GM12878 (cell line): ENCODE measurements at regions of chr1 and their contacts with region 1.

Region 1: DNA sequence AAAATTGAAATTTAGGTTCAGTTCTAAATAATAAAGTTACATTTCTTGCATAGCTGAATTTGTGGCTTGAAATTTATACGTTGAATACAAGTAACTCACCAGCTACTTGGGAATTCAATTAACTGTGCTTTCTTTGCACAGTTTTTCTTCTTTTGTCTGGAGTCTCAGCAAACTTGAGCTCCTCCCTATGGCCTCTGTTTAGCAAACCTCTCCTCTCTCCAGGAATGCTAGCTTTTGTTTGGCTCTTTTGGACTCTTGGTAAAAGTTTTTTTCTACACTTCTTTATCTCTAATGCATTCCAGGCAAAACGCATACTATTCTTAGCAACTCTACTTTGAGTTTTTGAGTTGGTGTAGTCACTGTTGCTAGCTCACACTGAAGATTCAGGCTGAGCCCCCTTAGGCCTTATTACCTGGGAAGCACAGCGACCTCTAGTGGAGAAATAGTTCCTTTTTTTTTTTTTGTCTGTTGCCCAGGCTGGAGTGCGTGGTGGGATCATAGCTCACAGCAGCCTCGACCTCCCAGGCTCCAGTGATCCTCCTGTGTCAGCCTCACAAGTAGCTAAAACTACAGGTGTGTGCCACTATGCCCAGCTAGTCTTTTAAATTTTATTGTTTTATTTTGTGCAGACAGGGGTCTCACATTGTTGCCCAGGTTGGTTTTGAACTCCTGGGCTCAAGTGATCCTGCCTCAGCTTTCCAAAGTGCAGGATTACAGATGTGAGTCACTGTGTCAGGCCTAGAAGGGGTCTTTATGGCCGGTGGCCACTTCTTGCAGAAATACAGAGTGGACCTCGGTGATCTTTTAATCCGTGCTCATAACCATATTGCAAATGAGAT is 61.7 kb downstream of the CASQ2 start:
- DNase-seq: peak; percentile 7
- ATAC-seq: peak; percentile 91
- H3K4me3 ChIP-seq: no peak overlapping the region
- H3K27ac ChIP-seq: no peak overlapping the region
- H3K4me1 ChIP-seq: no peaks in the 10 kb centered on the region
- H3K27me3 ChIP-seq: 0 out of 4 replicates have a peak, but pooled peaks cover 0 to 1% of the 10 kb centered on the region in 2 experiments
- CTCF ChIP-seq: peak; percentile 48 to 62 (median 59)
- EP300 ChIP-seq: no peak
- POLR2A ChIP-seq: no peak
- RAD21 ChIP-seq: peak; percentile 73

Region 2: DNA sequence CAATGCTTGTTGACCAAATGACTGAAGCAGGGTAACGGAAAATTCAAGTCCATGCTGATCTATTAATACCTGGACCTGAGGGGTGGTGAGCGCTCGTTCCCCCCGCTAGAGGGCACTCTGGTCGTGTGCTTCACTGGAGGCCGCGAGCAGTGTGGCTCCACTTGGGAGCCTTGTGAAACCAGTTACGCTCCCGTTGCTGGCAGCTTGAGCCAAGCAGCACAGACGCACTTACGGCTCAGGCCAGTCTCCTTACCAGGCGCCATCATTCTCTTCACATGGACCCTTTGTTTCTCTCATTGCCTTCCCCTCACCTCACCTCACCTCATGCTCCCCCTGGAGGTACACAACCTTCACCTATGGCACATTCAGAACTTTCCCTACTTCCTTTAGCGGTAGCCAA is 567.8 kb before region 1 on chr1:
- CTCF ChIA-PET with region 1: interaction called, 5 read pairs
- POLR2A ChIA-PET with region 1: no interaction called
- RAD21 ChIA-PET with region 1: no interaction called
- SMC1A ChIA-PET with region 1: interaction called, 3 read pairs
- in situ Hi-C with region 1: no loop called
- intact Hi-C with region 1: loop called (anchors 10 kb)
- DNase-seq: peak; percentile 9
- ATAC-seq: peak; percentile 100
- H3K4me3 ChIP-seq: no peak overlapping the region
- H3K27ac ChIP-seq: no peak overlapping the region
- H3K4me1 ChIP-seq: no peaks in the 10 kb centered on the region
- H3K27me3 ChIP-seq: no peaks in the 10 kb centered on the region; a peak in 1 of 4 replicates
- CTCF ChIP-seq: peak; percentile 85 to 88 (median 86); a peak in 5 of 6 replicates
- EP300 ChIP-seq: no peak
- POLR2A ChIP-seq: no peak
- RAD21 ChIP-seq: peak; percentile 77

Region 3: GRCh38 chr1:115609021-115609420 is 97.8 kb before region 1 on chr1:
- CTCF ChIA-PET with region 1: interaction called, 97 read pairs
- POLR2A ChIA-PET with region 1: no interaction called
- RAD21 ChIA-PET with region 1: interaction called, 48 read pairs
- SMC1A ChIA-PET with region 1: interaction called, 46 read pairs
- in situ Hi-C with region 1: loop called (anchors 5 kb)
- intact Hi-C with region 1: loop called (anchors 1 kb)
- DNase-seq: no peak
- ATAC-seq: no peak
- H3K4me3 ChIP-seq: no peak overlapping the region
- H3K27ac ChIP-seq: no peak overlapping the region
- H3K4me1 ChIP-seq: no peaks in the 10 kb centered on the region
- H3K27me3 ChIP-seq: no peaks in the 10 kb centered on the region
- CTCF ChIP-seq: no peak
- EP300 ChIP-seq: no peak
- POLR2A ChIP-seq: no peak
- RAD21 ChIP-seq: no peak

Region 4: GRCh38 chr1:115642168-115643072 is 64.4 kb before region 1 on chr1:
- CTCF ChIA-PET with region 1: interaction called, 57 read pairs
- POLR2A ChIA-PET with region 1: no interaction called
- RAD21 ChIA-PET with region 1: interaction called, 6 read pairs
- SMC1A ChIA-PET with region 1: interaction called, 4 read pairs
- in situ Hi-C with region 1: no loop called
- intact Hi-C with region 1: no loop called
- DNase-seq: peak; percentile 28
- ATAC-seq: peak; percentile 77
- H3K4me3 ChIP-seq: peak overlapping the region; percentile 90
- H3K27ac ChIP-seq: peak overlapping the region; percentile 52; the same call in 1 of the 2 replicates
- H3K4me1 ChIP-seq: peaks cover 7% of the 10 kb centered on the region
- H3K27me3 ChIP-seq: no peaks in the 10 kb centered on the region
- CTCF ChIP-seq: peak in 2 of 3 experiments; percentile 5 to 21; a peak in 1 of 6 replicates
- EP300 ChIP-seq: no peak
- POLR2A ChIP-seq: no peak
- RAD21 ChIP-seq: peak; percentile 26; the same call in 1 of the 2 replicates

Region 5: DNA sequence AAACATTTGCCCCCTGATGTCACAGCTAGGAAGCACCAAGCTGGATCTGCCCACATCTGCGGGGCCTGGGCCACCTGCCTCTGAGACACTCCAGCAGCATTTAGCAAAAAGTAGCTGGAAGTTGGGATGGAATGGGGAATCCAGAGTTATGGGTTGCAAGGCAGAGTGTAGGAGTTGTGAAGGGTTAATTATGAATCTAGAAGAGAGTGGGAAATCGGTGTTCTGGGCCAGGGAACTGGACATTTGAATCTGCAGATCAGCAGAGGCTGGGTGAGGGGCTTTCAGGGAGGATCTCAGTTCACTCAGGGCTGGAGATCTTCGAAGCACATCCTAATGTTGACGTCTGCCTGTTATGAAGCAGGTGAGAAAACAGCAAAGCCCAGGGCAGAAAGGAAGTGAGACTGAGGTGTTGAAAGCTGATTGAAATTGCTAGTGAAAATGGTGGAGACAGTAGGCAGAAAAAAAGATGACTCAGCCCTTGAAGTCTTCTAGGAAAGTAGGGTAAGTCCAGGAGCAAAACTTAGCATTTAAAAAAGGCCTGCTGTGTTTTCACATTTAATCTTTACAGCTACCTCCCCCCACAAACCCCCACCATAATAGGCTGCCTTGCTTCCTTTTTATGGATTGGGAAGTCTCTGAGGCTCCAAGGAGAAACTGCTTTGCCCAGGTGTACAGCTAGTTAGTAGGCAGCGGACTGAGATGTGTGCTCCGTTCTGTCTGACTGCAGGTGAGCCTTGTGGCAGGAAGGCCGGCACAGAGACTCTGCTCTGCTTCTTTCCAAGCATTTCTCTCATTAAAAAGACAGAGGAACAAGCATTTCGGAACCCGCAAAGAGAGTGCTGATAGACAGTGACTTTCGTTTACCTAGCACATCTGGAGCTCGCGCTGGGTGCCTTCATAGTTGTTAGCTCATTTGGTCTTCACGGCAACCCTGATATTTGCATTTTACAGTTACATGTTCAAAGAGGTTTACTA is 57.8 kb before region 1 on chr1:
- CTCF ChIA-PET with region 1: interaction called, 57 read pairs
- POLR2A ChIA-PET with region 1: no interaction called
- RAD21 ChIA-PET with region 1: interaction called, 9 read pairs
- SMC1A ChIA-PET with region 1: interaction called, 11 read pairs
- in situ Hi-C with region 1: no loop called
- intact Hi-C with region 1: no loop called
- DNase-seq: peak; percentile 87
- ATAC-seq: peak; percentile 94
- H3K4me3 ChIP-seq: peak overlapping the region; percentile 54
- H3K27ac ChIP-seq: peak overlapping the region; percentile 96
- H3K4me1 ChIP-seq: peaks cover 34% of the 10 kb centered on the region
- H3K27me3 ChIP-seq: no peaks in the 10 kb centered on the region
- CTCF ChIP-seq: no peak
- EP300 ChIP-seq: peak; percentile 89 to 95
- POLR2A ChIP-seq: no peak
- RAD21 ChIP-seq: no peak

Region 6: DNA sequence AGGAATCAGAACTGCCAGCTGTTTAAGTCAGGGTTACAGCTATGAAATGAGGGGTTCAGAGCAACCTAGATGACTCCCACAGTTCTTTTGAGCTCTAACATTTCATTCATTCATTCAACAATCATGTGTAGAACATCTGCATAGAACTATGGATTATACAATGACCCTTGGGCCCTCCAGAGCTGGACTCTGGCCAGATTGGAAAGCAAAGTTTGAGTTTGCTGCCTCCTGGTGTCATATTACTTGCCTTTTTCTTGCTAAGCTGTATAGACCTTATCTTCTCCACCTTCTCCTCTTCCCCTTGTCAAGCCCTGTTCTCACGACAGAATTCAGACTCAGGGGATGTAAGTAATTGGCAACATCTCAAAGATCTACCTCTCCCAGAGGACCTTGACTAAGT is 57.7 kb after region 1 on chr1:
- CTCF ChIA-PET with region 1: interaction called, 38 read pairs
- POLR2A ChIA-PET with region 1: no interaction called
- RAD21 ChIA-PET with region 1: interaction called, 7 read pairs
- SMC1A ChIA-PET with region 1: interaction called, 3 read pairs
- in situ Hi-C with region 1: no loop called
- intact Hi-C with region 1: no loop called
- DNase-seq: no peak
- ATAC-seq: peak; percentile 38; the same call in 1 of the 3 replicates
- H3K4me3 ChIP-seq: no peak overlapping the region
- H3K27ac ChIP-seq: no peak overlapping the region
- H3K4me1 ChIP-seq: no peaks in the 10 kb centered on the region
- H3K27me3 ChIP-seq: no peaks in the 10 kb centered on the region; a peak in 1 of 4 replicates
- CTCF ChIP-seq: peak; percentile 25 to 41 (median 37); a peak in 4 of 6 replicates
- EP300 ChIP-seq: no peak
- POLR2A ChIP-seq: no peak
- RAD21 ChIP-seq: peak; percentile 55

Region 7: DNA sequence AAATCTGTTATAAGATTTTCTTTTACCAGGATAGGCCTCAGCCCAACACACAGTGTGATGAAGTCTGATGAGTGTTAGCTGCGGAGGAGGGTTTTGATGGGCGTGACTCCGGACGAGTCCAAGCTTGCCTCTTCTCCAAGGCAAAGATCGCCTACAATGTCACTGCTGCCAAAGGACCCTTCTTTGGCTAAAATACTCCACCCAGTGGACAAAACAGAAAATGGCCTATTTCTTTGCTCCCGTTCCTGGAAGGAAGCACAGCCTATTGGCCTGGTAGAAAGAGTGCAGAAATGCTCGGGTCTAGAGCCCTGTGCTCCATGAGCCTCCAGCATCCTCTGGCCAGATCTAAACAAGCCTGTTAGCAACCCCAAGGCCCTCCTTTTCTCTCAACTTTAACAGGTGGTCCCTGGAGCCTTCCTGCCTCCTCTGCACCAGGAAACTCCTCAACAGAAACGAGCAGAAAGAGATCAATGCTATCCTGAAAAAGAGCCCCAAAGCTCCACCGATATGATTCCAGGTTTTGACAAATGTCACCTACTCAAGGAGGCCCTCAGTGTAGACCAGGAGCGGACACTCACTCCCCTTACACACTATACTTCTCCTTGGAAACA is 65.1 kb after region 1 on chr1:
- CTCF ChIA-PET with region 1: interaction called, 38 read pairs
- POLR2A ChIA-PET with region 1: no interaction called
- RAD21 ChIA-PET with region 1: interaction called, 7 read pairs
- SMC1A ChIA-PET with region 1: interaction called, 19 read pairs
- in situ Hi-C with region 1: no loop called
- intact Hi-C with region 1: no loop called
- DNase-seq: peak; percentile 53
- ATAC-seq: peak; percentile 97
- H3K4me3 ChIP-seq: no peak overlapping the region
- H3K27ac ChIP-seq: no peak overlapping the region
- H3K4me1 ChIP-seq: no peaks in the 10 kb centered on the region
- H3K27me3 ChIP-seq: no peaks in the 10 kb centered on the region; a peak in 2 of 4 replicates
- CTCF ChIP-seq: peak; percentile 67 to 77 (median 68)
- EP300 ChIP-seq: no peak
- POLR2A ChIP-seq: no peak
- RAD21 ChIP-seq: peak; percentile 96

Region 8: GRCh38 chr1:115839029-115839678 is 132.3 kb after region 1 on chr1:
- CTCF ChIA-PET with region 1: no interaction called
- POLR2A ChIA-PET with region 1: no interaction called
- RAD21 ChIA-PET with region 1: no interaction called
- SMC1A ChIA-PET with region 1: no interaction called
- in situ Hi-C with region 1: no loop called
- intact Hi-C with region 1: no loop called
- DNase-seq: no peak
- ATAC-seq: peak; percentile 61
- H3K4me3 ChIP-seq: no peak overlapping the region
- H3K27ac ChIP-seq: no peak overlapping the region
- H3K4me1 ChIP-seq: no peaks in the 10 kb centered on the region
- H3K27me3 ChIP-seq: peaks cover 10 to 22% of the 10 kb centered on the region in 2 experiments
- CTCF ChIP-seq: no peak
- EP300 ChIP-seq: no peak
- POLR2A ChIP-seq: no peak
- RAD21 ChIP-seq: no peak